ENCODE measurements at regions of chr17 and their contacts with region 1.

Region 1: DNA sequence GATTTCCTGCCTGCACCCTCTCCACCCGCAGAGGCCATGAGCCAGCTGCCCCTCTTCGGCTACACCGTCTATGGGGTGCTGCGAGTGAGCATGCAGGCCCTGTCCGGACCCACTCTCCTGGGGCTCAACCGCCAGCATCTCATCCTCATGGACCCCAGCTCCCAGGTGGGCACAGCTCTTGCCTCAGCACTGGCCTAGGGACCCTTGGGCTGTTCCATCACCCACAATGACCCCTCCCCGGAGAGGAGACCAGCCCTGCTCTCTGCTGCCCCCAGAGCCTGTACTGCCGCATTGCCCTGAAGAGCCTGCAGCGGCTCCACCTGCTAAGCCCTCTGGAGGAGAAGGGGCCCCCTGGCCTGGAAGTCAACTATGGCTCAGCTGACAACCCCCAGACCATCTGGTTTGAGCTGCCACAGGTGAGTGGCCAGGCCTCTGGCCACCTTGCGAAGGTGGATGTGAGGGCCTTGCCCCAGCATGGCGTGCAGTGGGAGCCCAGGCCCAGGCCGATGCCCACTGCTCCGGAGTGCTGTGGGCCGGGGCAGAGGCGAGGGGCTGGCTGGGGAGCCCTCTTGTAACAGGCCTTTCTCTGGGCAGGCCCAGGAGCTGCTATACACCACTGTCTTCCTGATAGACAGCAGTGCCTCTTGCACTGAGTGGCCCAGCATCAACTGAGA is 7.3 kb upstream of the SMIM5 start:
- DNase-seq: peak; percentile 15
- H3K4me3 ChIP-seq: no peak overlapping the region
- H3K27ac ChIP-seq: no peak overlapping the region
- H3K4me1 ChIP-seq: no peaks in the 10 kb centered on the region
- H3K27me3 ChIP-seq: no peaks in the 10 kb centered on the region
- CTCF ChIP-seq: peak; percentile 50 to 80
- POLR2A ChIP-seq: no peak

Region 2: DNA sequence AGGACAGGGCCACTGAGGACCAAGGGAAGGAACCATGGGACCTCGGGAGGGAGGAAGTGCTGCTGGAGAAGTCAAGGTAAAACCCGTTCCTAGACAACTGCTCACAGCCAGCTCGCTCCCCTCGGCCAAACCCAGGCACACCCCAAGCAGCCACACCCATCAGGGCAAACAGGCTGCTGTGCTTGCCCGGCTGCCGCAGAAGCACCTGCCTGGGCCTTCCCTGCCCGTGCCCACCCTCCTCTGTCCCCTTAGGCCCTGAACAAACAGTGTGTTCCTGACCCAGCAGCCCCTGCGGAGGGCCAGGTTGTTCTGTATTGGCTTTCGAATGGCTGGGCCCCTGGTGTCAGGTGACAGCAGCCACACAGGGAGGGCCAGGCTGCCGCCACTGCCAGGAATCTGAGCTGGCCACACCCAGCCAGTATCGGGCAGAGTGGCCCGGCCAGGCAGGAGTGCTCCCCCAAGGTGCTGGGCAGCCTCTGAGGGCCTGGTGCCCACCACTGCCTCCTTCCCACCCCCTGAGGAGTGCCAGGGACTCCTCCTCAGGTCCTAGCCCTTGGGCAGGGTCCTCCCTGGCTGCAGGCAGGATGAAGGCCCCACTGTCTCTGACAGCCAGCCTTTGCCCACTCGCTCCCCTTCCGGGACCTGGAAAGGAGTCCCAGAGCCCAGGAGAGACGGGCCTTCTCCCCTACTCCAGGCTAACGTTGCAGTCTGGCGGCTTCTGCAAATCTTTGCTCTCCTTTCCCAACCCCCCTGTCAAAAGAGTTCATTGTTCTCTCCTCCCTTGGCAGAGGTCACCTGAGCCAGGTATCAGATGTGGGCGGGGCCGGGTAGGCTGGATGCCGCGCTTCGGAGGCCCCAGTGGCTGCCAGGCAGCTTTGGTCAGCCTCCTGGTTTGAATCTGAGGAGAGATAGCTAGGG is 76.5 kb before region 1 on chr17:
- CTCF ChIA-PET with region 1: no interaction called
- POLR2A ChIA-PET with region 1: no interaction called
- dilution Hi-C with region 1: no loop called
- intact Hi-C with region 1: no loop called
- DNase-seq: no peak
- H3K4me3 ChIP-seq: no peak overlapping the region
- H3K27ac ChIP-seq: no peak overlapping the region
- H3K4me1 ChIP-seq: no peaks in the 10 kb centered on the region
- H3K27me3 ChIP-seq: no peaks in the 10 kb centered on the region
- CTCF ChIP-seq: no peak
- POLR2A ChIP-seq: no peak

Region 3: GRCh38 chr17:75614006-75614405 is 11.9 kb before region 1 on chr17:
- CTCF ChIA-PET with region 1: interaction called, 19 read pairs
- POLR2A ChIA-PET with region 1: no interaction called
- dilution Hi-C with region 1: no loop called
- intact Hi-C with region 1: no loop called
- DNase-seq: no peak
- H3K4me3 ChIP-seq: no peak overlapping the region
- H3K27ac ChIP-seq: no peak overlapping the region
- H3K4me1 ChIP-seq: no peaks in the 10 kb centered on the region
- H3K27me3 ChIP-seq: no peaks in the 10 kb centered on the region
- CTCF ChIP-seq: peak in 1 of 2 donors; percentile 9
- POLR2A ChIP-seq: no peak

Region 4: GRCh38 chr17:76032073-76032779 is 406.3 kb after region 1 on chr17:
- CTCF ChIA-PET with region 1: no interaction called
- POLR2A ChIA-PET with region 1: no interaction called
- dilution Hi-C with region 1: no loop called
- intact Hi-C with region 1: no loop called
- DNase-seq: peak; percentile 27
- H3K4me3 ChIP-seq: no peak overlapping the region
- H3K27ac ChIP-seq: no peak overlapping the region
- H3K4me1 ChIP-seq: peaks cover 11% of the 10 kb centered on the region
- H3K27me3 ChIP-seq: no peaks in the 10 kb centered on the region
- CTCF ChIP-seq: peak; percentile 35 to 69
- POLR2A ChIP-seq: no peak